BJ (cell line): ENCODE measurements at regions of chr16 and their contacts with region 1.

Region 1: DNA sequence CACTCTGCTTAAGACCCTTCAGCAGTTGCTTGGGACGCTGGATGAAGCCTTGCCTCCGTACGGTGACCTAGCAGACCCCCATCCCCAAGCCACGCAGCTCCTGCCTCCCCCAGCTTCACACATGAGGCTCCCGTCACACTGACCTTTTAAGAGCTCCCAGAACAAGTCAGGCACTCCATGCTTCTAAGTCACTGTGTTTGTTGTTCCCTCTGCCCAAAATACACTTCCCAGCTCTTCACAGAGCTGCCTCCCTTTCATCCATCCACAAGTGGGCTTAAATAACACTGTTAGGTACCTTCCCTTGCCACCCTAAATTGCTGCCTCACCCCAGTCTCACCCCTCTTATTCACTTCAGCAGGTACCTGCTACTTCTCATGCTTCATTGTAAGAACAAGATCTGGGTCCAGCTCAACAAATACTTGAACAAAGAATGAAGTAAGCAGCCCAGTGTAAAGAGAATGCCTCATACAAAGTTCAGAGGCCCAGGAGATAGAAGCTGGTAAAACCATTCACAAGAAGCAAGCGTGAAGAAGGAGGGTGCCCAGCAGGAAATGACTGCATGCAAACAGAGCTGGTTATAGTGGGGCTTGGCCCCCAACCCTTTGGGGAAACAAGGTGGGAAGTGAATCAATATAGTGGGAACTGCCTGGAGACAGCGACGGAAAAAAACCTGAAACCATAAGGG is 5.8 kb downstream of the ZC3H7A start:
- DNase-seq: no peak
- H3K4me3 ChIP-seq: no peak overlapping the region
- H3K27me3 ChIP-seq: no peaks in the 10 kb centered on the region
- CTCF ChIP-seq: no peak

Region 2: DNA sequence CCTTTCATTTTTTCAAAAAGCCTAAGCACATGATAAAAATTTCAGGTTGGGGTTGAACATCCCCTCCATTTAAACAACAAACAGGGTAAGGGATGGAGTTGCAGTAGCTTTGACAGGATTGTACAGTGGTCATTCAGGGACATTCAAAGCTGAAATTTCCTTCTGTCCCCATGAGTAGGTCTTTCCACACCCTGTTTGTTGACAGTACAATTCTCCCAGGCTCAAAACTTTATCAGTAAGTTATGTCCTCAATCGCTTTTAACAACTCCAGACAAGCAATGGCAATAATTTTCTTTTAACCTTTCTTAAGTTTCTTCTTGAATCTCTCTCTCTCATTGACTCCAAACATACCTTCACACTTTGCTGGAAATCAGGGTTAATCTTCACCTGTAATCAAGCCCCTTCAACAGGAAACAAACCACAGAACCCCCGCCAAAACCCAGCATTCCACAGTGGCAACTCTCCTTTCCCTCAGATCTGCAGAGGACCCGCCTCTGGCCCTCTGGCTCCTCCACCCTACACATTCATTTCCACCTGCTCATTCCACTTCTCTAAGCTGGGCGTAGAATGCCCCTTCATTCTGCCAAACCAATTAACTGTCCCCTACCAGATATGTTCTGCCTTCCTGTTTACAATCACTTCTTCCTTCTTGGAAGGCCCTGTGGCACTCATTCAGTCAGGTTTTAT is 69.4 kb before region 1 on chr16:
- CTCF ChIA-PET with region 1: no interaction called
- POLR2A ChIA-PET with region 1: no interaction called
- DNase-seq: no peak
- H3K4me3 ChIP-seq: no peak overlapping the region
- H3K27me3 ChIP-seq: no peaks in the 10 kb centered on the region
- CTCF ChIP-seq: no peak

Region 3: DNA sequence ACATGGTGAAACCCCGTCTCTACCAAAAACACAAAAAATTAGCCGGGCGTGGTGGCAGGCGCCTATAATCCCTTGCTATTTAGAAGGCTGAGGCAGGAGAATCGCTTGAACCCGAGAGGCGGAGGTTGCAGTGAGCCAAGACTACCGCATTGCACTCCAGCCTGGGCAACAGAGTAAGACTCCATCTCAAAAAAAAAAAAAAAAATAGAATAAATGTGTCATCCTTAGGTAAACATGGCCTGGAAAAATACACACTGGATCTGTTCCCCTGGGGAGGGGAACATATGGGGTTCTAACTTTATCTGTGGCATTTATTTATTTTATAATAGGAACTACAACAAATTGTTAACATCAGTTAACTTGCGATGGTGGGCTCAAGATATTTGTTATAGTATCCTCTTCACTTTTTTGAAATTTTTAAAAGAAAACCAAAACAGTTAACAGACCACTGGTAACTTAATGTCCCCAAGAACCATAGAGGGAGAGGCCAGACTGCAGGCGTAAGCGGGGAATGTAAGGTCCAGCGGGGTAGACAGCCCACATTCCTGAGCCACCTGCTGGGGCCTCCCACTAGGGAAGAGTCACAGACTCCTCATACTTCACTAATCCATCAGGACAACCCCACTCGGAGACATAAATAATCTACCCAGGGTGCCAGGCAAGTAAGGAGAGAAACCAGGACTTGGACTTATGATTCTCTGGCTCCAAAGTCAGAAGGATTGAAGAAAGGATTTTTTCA is 36.1 kb before region 1 on chr16:
- CTCF ChIA-PET with region 1: no interaction called
- POLR2A ChIA-PET with region 1: interaction called, 20 read pairs
- DNase-seq: no peak
- H3K4me3 ChIP-seq: no peak overlapping the region
- H3K27me3 ChIP-seq: no peaks in the 10 kb centered on the region
- CTCF ChIP-seq: no peak